CD14-positive monocyte (primary cell): ENCODE measurements at regions of chr22 and their contacts with region 1.

Region 1: GRCh38 chr22:30968924-30969539 is at the start of gene TUG1:
- DNase-seq: peak; percentile 96 to 98 (median 98)
- H3K4me3 ChIP-seq: peak within 1 kb of the TSS; percentile 82 to 98 (median 88)
- H3K4me3 Mint-ChIP-seq: peak within 1 kb of the TSS; percentile 94 to 95
- H3K27ac ChIP-seq: peak within 1 kb of the TSS; percentile 85 to 91
- H3K27ac Mint-ChIP-seq: peak within 1 kb of the TSS; percentile 90 to 99 (median 96)
- H3K4me1 ChIP-seq: peaks cover 18 to 28% of the 10 kb centered on the region in 2 donors
- H3K4me1 Mint-ChIP-seq: peaks cover 34% of the 10 kb centered on the region
- H3K27me3 ChIP-seq: no peaks in the 10 kb centered on the region
- H3K27me3 Mint-ChIP-seq: peaks cover 0 to 3% (median 0%) of the 10 kb centered on the region in 3 donors
- CTCF ChIP-seq: no peak
- polyA plus RNA-seq, gene TUG1: 9.9 to 81.3 (median 13.9) TPM

Region 2: DNA sequence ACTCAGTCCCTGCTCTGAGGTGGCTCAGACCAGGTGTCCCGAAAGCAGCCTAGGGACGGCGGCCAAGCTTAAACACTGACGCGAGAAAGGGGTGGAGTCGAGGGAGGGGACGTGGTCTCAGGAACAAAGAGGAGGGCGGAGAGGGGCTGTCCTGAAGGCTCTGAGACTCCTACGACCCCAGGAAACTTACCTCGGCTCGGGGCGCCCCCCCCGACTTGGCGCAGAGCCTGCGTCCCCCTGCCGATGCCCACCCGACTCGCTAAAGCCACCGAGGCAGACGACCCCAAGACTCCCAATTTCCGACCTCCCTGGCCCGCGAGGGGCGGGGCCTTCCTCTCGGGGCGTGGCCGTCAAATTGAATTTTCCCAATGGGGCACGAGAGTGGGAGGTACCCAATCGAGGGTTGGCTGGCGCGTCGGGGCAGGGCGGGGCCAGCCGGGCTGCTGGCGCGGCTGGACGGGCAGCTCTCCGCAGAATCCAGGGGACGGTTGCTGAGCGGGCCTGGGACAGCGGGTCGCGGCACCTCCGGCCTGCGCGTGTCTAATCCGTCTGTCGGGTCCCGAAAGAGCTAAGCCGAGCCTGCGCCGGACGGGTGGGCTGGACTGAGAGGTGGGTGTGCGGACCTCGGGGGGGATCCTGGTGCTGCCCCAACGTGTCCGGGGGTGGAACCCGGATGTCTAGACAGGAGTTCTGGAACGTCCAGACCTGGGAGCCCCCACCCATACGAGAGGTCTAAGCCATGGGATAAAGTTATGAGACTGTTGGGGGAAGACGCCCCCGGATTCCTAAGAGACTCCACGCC is 112.0 kb after region 1 on chr22 and contains the start of gene SMTN:
- intact Hi-C with region 1: loop called (anchors 5 kb)
- DNase-seq: peak; percentile 76 to 86 (median 80)
- H3K4me3 ChIP-seq: peak within 1 kb of the TSS; percentile 56 to 85 (median 75)
- H3K4me3 Mint-ChIP-seq: peak within 1 kb of the TSS; percentile 83 to 94
- H3K27ac ChIP-seq: peak within 1 kb of the TSS in 1 of 2 donors; percentile 64
- H3K27ac Mint-ChIP-seq: peak within 1 kb of the TSS in 6 of 7 donors; percentile 40 to 87 (median 74)
- H3K4me1 ChIP-seq: peaks cover 40 to 53% of the 10 kb centered on the region in 2 donors
- H3K4me1 Mint-ChIP-seq: peaks cover 45% of the 10 kb centered on the region
- H3K27me3 ChIP-seq: no peaks in the 10 kb centered on the region
- H3K27me3 Mint-ChIP-seq: peaks cover 3 to 6% (median 4%) of the 10 kb centered on the region in 3 donors
- CTCF ChIP-seq: no peak
- polyA plus RNA-seq, gene SMTN: 0.87 to 13.3 (median 0.88) TPM

Region 3: GRCh38 chr22:31211862-31212730 is 243.1 kb after region 1 on chr22 and contains the start of gene LIMK2:
- intact Hi-C with region 1: loop called in 1 of 2 experiments (anchors 10 kb)
- DNase-seq: peak; percentile 80 to 89 (median 88)
- H3K4me3 ChIP-seq: peak within 1 kb of the TSS; percentile 71 to 97 (median 94)
- H3K4me3 Mint-ChIP-seq: peak within 1 kb of the TSS; percentile 91 to 93
- H3K27ac ChIP-seq: peak within 1 kb of the TSS; percentile 76 to 92
- H3K27ac Mint-ChIP-seq: peak within 1 kb of the TSS; percentile 86 to 97 (median 93)
- H3K4me1 ChIP-seq: peaks cover 61 to 69% of the 10 kb centered on the region in 2 donors
- H3K4me1 Mint-ChIP-seq: peaks cover 62% of the 10 kb centered on the region
- H3K27me3 ChIP-seq: no peaks in the 10 kb centered on the region
- H3K27me3 Mint-ChIP-seq: peaks cover 0 to 6% (median 0%) of the 10 kb centered on the region in 3 donors
- CTCF ChIP-seq: peak; percentile 84
- polyA plus RNA-seq, gene LIMK2: 5.5 to 14.2 (median 10.1) TPM

Region 4: DNA sequence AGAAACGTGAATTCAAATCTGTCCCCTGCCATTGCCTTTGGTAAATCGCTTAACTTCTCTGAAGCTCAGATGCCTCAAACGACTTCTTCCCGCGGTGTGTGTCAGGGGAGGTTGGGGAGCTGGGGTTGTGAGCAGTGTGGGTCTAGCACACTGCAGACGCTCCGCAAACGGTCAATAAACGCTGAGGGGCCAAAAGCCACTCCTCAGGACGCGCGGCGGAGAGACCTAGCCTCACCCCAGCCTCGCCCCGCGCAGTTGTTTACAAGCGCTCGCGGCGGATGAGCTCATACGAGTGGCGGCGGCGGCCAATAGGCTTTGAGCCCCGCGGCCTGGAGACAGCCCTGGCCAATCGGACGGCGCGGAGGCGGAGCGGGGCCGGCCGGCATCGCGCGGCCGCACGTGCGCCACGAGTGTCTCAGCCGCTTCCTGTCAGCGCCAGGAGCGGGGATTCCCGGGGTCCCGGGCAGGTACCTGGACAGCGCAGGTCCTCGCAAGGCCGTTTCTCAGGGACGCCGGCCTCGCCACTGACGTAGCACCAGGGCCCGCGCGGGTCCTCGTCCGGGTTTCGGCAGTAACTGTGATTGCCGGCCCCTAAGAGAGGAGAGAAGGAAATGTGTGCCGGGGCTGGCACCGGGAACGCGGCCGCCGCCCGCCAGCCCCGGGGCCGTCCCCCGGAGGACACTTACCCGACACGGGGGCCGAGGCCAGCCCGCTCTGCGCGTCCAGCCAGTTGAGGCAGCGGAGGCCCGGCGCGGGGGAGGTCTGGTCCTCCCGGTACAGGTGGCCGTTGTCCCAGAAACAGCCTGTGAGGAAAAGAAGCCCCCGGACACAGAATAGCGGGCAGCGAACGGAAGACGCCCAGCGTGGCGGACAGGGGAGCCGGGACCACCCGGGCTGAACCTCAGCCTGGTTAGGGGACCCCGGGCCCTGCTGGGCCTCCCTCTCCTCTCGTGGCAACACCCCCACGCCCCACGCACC is 321.8 kb after region 1 on chr22:
- intact Hi-C with region 1: loop called in 1 of 2 experiments (anchors 5 kb)
- DNase-seq: peak; percentile 86 to 93 (median 91)
- H3K4me3 ChIP-seq: peak overlapping the region; percentile 68 to 96 (median 94)
- H3K4me3 Mint-ChIP-seq: peak overlapping the region; percentile 92 to 97
- H3K27ac ChIP-seq: peak overlapping the region; percentile 96 to 99
- H3K27ac Mint-ChIP-seq: peak overlapping the region; percentile 99 to 100 (median 99)
- H3K4me1 ChIP-seq: peaks cover 74 to 92% of the 10 kb centered on the region in 2 donors
- H3K4me1 Mint-ChIP-seq: peaks cover 67% of the 10 kb centered on the region
- H3K27me3 ChIP-seq: no peaks in the 10 kb centered on the region
- H3K27me3 Mint-ChIP-seq: peaks cover 0 to 5% (median 3%) of the 10 kb centered on the region in 3 donors
- CTCF ChIP-seq: no peak